ENCODE measurements at regions of chr17 and their contacts with region 1.

Region 1: DNA sequence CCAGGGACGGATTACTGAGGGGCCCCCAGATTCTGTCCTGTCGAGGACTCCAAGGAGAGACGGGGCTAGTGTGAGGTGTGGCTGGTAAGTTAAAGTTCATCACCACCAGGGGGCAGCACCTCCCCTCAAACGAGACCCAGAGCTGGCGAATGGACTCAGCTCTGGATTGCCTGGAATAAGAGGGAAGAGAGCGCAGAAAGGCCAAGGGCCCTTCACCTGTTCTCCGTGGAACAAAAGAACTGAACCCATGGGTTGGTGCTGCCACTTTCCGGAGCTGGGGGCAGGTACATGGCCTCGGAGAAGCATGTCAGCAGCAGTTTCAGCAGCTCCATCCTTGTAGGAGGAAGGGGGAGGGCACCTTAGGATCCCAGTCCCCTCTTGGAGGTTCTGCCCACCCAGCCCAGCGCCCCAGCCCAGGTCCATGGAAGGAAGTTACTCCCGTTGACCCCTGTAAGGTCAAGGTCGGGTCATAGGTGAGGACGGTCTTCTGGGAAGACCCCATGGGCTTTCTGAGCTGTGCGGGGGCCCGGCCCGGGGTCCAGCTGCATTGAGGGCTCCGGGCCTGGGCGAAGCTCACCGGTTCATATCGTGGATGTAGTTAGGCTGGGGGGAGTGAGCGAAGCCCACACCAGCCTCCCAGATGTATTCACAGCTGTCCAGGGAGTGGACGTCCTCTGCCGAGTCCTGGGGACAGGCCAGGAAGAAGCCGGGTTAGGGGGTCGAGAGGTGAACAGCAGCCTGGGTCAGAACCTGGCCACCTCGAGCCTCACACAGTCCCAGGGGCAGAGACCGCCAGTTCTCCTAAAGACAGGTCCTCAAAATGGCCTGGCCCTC is 10.7 kb downstream of the HID1 start:
- DNase-seq: peak; percentile 80
- ATAC-seq: peak; percentile 80
- H3K4me3 ChIP-seq: no peak overlapping the region
- H3K27ac ChIP-seq: no peak overlapping the region
- H3K4me1 ChIP-seq: peaks cover 11 to 20% of the 10 kb centered on the region in 2 experiments; a peak in 3 of 4 replicates
- H3K27me3 ChIP-seq: no peaks in the 10 kb centered on the region
- CTCF ChIP-seq: peak; percentile 75 to 95 (median 87)
- POLR2A ChIP-seq: no peak
- RAD21 ChIP-seq: peak; percentile 99

Region 2: GRCh38 chr17:74873038-74873873 is 88.6 kb before region 1 on chr17:
- CTCF ChIA-PET with region 1: interaction called, 21 read pairs
- POLR2A ChIA-PET with region 1: interaction called, 3 read pairs
- RAD21 ChIA-PET with region 1: interaction called in 1 of 2 experiments, 11 read pairs
- intact Hi-C with region 1: loop called (anchors 5 kb)
- DNase-seq: peak; percentile 100
- ATAC-seq: peak; percentile 87
- H3K4me3 ChIP-seq: peak overlapping the region; percentile 87 to 96
- H3K27ac ChIP-seq: peak overlapping the region; percentile 94
- H3K4me1 ChIP-seq: peaks cover 14 to 45% of the 10 kb centered on the region in 2 experiments
- H3K27me3 ChIP-seq: no peaks in the 10 kb centered on the region
- CTCF ChIP-seq: no peak
- POLR2A ChIP-seq: peak; percentile 93
- RAD21 ChIP-seq: no peak

Region 3: GRCh38 chr17:74987418-74987908 is 25.6 kb after region 1 on chr17 and contains the start of gene CDR2L:
- CTCF ChIA-PET with region 1: interaction called, 16 read pairs
- POLR2A ChIA-PET with region 1: interaction called, 5 read pairs
- RAD21 ChIA-PET with region 1: interaction called in 1 of 2 experiments, 3 read pairs
- intact Hi-C with region 1: no loop called
- DNase-seq: peak; percentile 83
- ATAC-seq: peak; percentile 88
- H3K4me3 ChIP-seq: peak within 1 kb of the TSS; percentile 71 to 75
- H3K27ac ChIP-seq: peak within 1 kb of the TSS; percentile 91
- H3K4me1 ChIP-seq: peaks cover 48 to 58% of the 10 kb centered on the region in 2 experiments
- H3K27me3 ChIP-seq: no peaks in the 10 kb centered on the region
- CTCF ChIP-seq: no peak
- POLR2A ChIP-seq: peak; percentile 90
- RAD21 ChIP-seq: no peak
- total RNA-seq, gene CDR2L: 26.5 TPM

Region 4: DNA sequence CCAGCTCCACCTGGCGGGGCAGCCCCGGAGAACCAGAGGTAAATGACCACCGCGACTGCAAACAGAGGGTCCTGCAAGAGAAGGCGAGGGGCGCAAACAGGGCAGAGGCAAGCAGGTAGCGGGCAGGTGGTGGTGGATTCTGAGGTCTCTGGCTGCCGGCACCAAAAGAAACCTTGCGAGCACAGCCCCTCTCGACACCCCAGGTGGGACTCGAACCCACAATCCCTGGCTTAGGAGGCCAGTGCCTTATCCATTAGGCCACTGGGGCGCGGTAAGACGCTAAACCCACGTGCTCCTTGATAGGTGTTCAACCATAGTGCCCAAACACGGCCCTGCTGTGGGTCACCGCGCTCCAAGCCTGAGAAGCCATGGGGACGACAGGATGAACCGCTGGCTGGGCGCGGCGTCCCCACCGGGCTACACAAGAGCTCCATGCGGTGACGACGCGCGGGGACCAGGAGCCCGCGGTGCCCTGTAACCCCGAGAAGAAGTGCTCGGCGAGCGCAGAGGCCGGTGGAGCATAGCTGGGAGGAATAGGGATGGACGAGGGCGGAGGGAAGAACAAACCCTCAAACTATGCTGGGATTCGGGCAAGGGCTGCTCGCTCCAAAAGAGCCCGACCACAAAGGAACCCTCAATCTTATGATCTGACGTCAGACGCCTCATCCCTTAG is 72.5 kb after region 1 on chr17:
- CTCF ChIA-PET with region 1: interaction called, 31 read pairs
- POLR2A ChIA-PET with region 1: interaction called, 10 read pairs
- RAD21 ChIA-PET with region 1: interaction called in 1 of 2 experiments, 9 read pairs
- intact Hi-C with region 1: loop called (anchors 5 kb)
- DNase-seq: peak; percentile 93
- ATAC-seq: peak; percentile 62
- H3K4me3 ChIP-seq: peak overlapping the region; percentile 46 to 57
- H3K27ac ChIP-seq: peak overlapping the region; percentile 87
- H3K4me1 ChIP-seq: peaks cover 45 to 58% of the 10 kb centered on the region in 2 experiments
- H3K27me3 ChIP-seq: no peaks in the 10 kb centered on the region
- CTCF ChIP-seq: peak in 2 of 3 experiments; percentile 7 to 37; a peak in 1 of 6 replicates
- POLR2A ChIP-seq: no peak
- RAD21 ChIP-seq: no peak

Region 5: GRCh38 chr17:75109407-75110233 is 147.7 kb after region 1 on chr17 and contains the start of gene ARMC7:
- CTCF ChIA-PET with region 1: interaction called, 14 read pairs
- POLR2A ChIA-PET with region 1: interaction called, 5 read pairs
- RAD21 ChIA-PET with region 1: interaction called, 4 read pairs
- intact Hi-C with region 1: loop called (anchors 2 kb)
- DNase-seq: peak; percentile 72
- ATAC-seq: peak; percentile 76
- H3K4me3 ChIP-seq: peak within 1 kb of the TSS; percentile 81 to 91
- H3K27ac ChIP-seq: peak within 1 kb of the TSS; percentile 72
- H3K4me1 ChIP-seq: peaks cover 19 to 51% of the 10 kb centered on the region in 2 experiments
- H3K27me3 ChIP-seq: no peaks in the 10 kb centered on the region
- CTCF ChIP-seq: no peak
- POLR2A ChIP-seq: peak; percentile 87
- RAD21 ChIP-seq: peak; percentile 39
- total RNA-seq, gene ARMC7: 43.2 TPM

Region 6: GRCh38 chr17:75238684-75239191 is 276.9 kb after region 1 on chr17:
- CTCF ChIA-PET with region 1: interaction called, 13 read pairs
- POLR2A ChIA-PET with region 1: no interaction called
- RAD21 ChIA-PET with region 1: interaction called in 1 of 2 experiments, 4 read pairs
- intact Hi-C with region 1: loop called (anchors 1 kb)
- DNase-seq: peak; percentile 59
- ATAC-seq: peak; percentile 79
- H3K4me3 ChIP-seq: no peak overlapping the region
- H3K27ac ChIP-seq: no peak overlapping the region; the same call in 1 of the 2 replicates
- H3K4me1 ChIP-seq: peaks cover 0 to 11% of the 10 kb centered on the region in 2 experiments; a peak in 1 of 4 replicates
- H3K27me3 ChIP-seq: no peaks in the 10 kb centered on the region
- CTCF ChIP-seq: peak; percentile 77 to 99 (median 99)
- POLR2A ChIP-seq: no peak
- RAD21 ChIP-seq: peak; percentile 68

Measured in HCT116 (cell line).